ENCODE measurements at regions of chr16 and their contacts with region 1.

Region 1: DNA sequence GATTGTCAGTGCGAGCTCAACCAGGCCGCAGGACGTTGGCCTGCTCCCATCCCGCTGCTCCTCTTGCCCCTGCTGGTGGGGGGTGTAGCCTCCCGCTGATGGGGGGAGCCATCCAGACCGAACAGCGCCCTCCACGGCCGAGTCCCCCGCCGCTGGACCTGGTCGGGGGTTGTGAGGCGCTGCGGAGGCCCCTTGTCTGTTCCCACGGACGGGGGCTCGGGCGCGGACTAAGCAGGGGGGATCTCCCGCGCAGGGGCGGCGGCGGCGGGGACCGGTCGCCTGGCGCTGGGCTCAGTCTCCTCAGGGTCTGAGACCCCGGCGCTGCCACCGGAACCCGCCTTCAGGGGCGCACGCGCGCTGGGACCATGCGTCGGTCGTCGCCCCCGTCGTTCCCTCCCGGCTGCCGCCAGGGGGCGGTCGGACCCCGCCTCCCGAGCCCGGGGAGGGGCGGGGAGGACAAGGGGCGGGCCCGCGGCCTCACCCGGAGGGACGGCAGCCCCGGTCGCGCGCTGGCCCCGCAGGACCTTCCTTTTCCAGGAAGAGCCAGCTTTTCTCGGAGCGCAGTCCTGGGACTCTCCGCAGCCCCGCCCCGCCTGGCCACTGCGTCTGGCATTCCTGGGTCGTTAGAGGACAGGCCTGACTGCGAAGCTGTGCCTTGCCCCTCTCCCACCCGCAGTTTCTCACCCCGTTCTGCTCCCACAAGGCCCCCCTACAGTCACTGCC is 6.3 kb upstream of the IL32 start:
- DNase-seq: peak; percentile 73 to 90
- H3K4me3 ChIP-seq: peak overlapping the region; percentile 56 to 73
- H3K27ac ChIP-seq: peak overlapping the region; percentile 52 to 55
- H3K4me1 ChIP-seq: peaks cover 0 to 24% (median 19%) of the 10 kb centered on the region in 4 donors
- H3K27me3 ChIP-seq: peaks cover 0 to 11% of the 10 kb centered on the region in 2 donors
- CTCF ChIP-seq: peak; percentile 92 to 94

Region 2: DNA sequence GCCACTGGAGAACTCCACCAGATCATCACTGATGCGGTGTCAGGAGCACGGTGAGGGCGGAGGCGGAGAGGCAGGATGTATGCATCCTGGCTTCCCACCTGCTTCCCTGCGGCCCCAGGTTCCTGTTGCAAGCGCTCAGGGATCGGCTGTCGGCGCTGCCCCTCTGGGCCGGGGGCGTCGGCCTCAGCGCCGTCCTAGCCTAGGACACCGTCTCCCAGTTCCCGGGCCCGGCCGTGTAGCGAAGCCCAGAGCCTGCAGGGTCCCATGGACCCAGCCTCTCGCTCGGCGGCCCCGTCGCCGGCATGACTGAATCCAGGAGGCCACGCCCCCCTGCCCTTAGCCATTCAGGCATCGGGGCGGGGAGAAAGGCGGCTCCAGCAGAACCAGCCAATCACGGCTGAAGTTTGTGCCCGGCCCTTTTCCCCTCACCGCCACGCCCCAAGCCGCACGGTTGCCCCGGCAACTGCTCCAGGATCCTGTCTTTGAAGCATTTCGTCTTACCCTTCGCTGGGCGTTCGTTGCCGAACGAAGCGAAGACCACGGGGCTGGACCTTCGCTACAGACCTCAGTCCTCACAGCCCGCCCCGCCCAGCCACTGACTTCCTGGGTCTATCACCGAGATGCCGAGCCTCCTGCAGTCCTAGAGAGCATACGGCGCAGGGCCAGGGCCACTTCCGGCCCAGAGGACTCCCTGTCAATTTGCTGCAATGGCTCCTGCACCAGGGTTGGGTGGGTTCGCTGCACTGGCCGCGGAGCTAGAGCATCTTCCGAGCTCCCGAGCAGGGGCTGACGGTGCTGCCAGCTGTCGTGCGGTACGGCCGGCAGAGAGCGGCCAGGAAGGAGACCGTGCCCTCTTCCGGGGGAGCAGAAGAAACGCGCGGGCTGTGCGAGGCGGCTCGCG is 65.1 kb after region 1 on chr16:
- intact Hi-C with region 1: loop called (anchors 5 kb)
- DNase-seq: peak; percentile 97 to 98
- H3K4me3 ChIP-seq: peak overlapping the region; percentile 77 to 87
- H3K27ac ChIP-seq: peak overlapping the region; percentile 73 to 83
- H3K4me1 ChIP-seq: peaks cover 0 to 25% (median 21%) of the 10 kb centered on the region in 4 donors
- H3K27me3 ChIP-seq: no peaks in the 10 kb centered on the region
- CTCF ChIP-seq: no peak

Region 3: GRCh38 chr16:3165111-3165822 is 106.1 kb after region 1 on chr16:
- intact Hi-C with region 1: loop called (anchors 5 kb)
- DNase-seq: no peak
- H3K4me3 ChIP-seq: peak overlapping the region; percentile 19 to 26
- H3K27ac ChIP-seq: no peak overlapping the region
- H3K4me1 ChIP-seq: peaks cover 0 to 8% (median 2%) of the 10 kb centered on the region in 4 donors
- H3K27me3 ChIP-seq: peaks cover 0 to 56% of the 10 kb centered on the region in 2 donors
- CTCF ChIP-seq: no peak

Measured in tibial artery (tissue), 4 donors.